ENCODE measurements at regions of chr2 and their contacts with region 1.

Region 1: GRCh38 chr2:172102391-172103278 is at the start of gene DLX2:
- DNase-seq: peak in 8 of 9 experiments; percentile 42 to 85 (median 66)
- ATAC-seq: peak; percentile 24
- H3K4me3 ChIP-seq: peak within 1 kb of the TSS; percentile 46 to 57
- H3K4me3 Mint-ChIP-seq: peak within 1 kb of the TSS; percentile 80
- H3K27ac ChIP-seq: no peak within 1 kb of the TSS
- H3K27ac Mint-ChIP-seq: no peak within 1 kb of the TSS
- H3K4me1 ChIP-seq: peaks cover 76% of the 10 kb centered on the region
- H3K4me1 Mint-ChIP-seq: peaks cover 46% of the 10 kb centered on the region
- H3K27me3 ChIP-seq: peaks cover 86 to 89% of the 10 kb centered on the region in 2 experiments
- H3K27me3 Mint-ChIP-seq: peaks cover 62% of the 10 kb centered on the region
- CTCF ChIP-seq: no peak
- total RNA-seq, gene DLX2: 0.14 TPM in 1 of 2 experiments, not detected in the other

Region 2: GRCh38 chr2:171433763-171434670 is 668.6 kb before region 1 on chr2 and contains the starts of genes DCAF17 and METTL8:
- CTCF ChIA-PET with region 1: no interaction called
- POLR2A ChIA-PET with region 1: no interaction called
- intact Hi-C with region 1: loop called in 1 of 2 experiments (anchors 10 kb)
- DNase-seq: peak; percentile 84 to 97 (median 93)
- ATAC-seq: peak; percentile 91
- H3K4me3 ChIP-seq: peak within 1 kb of the TSS; percentile 79 to 93
- H3K4me3 Mint-ChIP-seq: peak within 1 kb of the TSS; percentile 91
- H3K27ac ChIP-seq: peak within 1 kb of the TSS; percentile 80 to 97
- H3K27ac Mint-ChIP-seq: peak within 1 kb of the TSS; percentile 96
- H3K4me1 ChIP-seq: peaks cover 12% of the 10 kb centered on the region
- H3K4me1 Mint-ChIP-seq: peaks cover 47% of the 10 kb centered on the region
- H3K27me3 ChIP-seq: no peaks in the 10 kb centered on the region
- H3K27me3 Mint-ChIP-seq: no peaks in the 10 kb centered on the region
- CTCF ChIP-seq: peak; percentile 12
- total RNA-seq, gene DCAF17: 12.5 to 12.9 TPM
- total RNA-seq, gene METTL8: 6.2 to 7.7 TPM

Region 3: GRCh38 chr2:171598713-171599319 is 503.8 kb before region 1 on chr2:
- CTCF ChIA-PET with region 1: interaction called, 3 read pairs
- POLR2A ChIA-PET with region 1: no interaction called
- intact Hi-C with region 1: loop called in 1 of 2 experiments (anchors 5 kb)
- DNase-seq: peak in 8 of 9 experiments; percentile 9 to 75 (median 48)
- ATAC-seq: peak; percentile 95
- H3K4me3 ChIP-seq: no peak overlapping the region
- H3K4me3 Mint-ChIP-seq: no peak overlapping the region
- H3K27ac ChIP-seq: no peak overlapping the region
- H3K27ac Mint-ChIP-seq: no peak overlapping the region
- H3K4me1 ChIP-seq: peaks cover 4% of the 10 kb centered on the region
- H3K4me1 Mint-ChIP-seq: peaks cover 4% of the 10 kb centered on the region
- H3K27me3 ChIP-seq: no peaks in the 10 kb centered on the region
- H3K27me3 Mint-ChIP-seq: peaks cover 4% of the 10 kb centered on the region
- CTCF ChIP-seq: peak; percentile 82

Region 4: DNA sequence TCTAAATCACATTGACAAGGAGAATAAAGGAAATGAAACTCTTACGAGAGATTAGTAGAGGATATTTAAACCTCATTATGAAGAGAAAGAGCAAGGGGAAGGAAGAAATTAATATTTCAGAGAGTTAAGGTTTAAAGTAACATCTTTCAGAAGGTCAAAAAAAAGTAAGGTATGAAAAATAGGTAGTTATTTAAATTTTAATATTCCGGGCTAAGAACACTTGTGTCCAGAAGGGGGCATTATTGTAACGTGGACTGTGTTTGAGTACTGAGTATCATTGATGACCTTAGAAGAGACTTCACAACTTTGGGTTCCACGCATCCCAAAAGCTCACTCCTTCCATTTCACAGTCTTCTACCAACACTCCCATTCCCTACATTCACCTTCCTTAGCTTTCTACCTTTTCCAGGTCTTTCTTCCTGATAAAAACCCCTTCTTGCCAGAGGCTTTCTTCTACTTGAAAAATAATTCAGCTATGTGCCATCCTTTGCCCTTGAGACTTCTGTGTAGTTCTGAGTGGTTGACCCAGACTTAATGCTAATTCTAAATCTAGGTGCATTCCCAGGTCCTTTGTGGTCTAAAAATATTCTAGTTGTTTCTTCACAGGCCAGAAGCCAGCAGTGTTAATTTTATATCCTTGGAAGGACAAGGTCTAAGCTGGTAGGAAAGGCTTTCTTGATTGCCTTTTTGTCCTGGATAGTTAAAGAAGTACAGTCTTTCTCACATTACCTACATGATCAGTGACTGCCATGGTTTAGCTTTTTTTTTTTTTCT is 398.9 kb before region 1 on chr2:
- CTCF ChIA-PET with region 1: interaction called, 10 read pairs
- POLR2A ChIA-PET with region 1: interaction called, 3 read pairs
- intact Hi-C with region 1: loop called (anchors 2 kb)
- DNase-seq: peak in 2 of 9 experiments; percentile 47 to 59
- ATAC-seq: no peak
- H3K4me3 ChIP-seq: no peak overlapping the region
- H3K4me3 Mint-ChIP-seq: no peak overlapping the region
- H3K27ac ChIP-seq: no peak overlapping the region
- H3K27ac Mint-ChIP-seq: peak overlapping the region; percentile 15
- H3K4me1 ChIP-seq: no peaks in the 10 kb centered on the region
- H3K4me1 Mint-ChIP-seq: peaks cover 7% of the 10 kb centered on the region
- H3K27me3 ChIP-seq: no peaks in the 10 kb centered on the region
- H3K27me3 Mint-ChIP-seq: no peaks in the 10 kb centered on the region
- CTCF ChIP-seq: peak; percentile 54

Region 5: DNA sequence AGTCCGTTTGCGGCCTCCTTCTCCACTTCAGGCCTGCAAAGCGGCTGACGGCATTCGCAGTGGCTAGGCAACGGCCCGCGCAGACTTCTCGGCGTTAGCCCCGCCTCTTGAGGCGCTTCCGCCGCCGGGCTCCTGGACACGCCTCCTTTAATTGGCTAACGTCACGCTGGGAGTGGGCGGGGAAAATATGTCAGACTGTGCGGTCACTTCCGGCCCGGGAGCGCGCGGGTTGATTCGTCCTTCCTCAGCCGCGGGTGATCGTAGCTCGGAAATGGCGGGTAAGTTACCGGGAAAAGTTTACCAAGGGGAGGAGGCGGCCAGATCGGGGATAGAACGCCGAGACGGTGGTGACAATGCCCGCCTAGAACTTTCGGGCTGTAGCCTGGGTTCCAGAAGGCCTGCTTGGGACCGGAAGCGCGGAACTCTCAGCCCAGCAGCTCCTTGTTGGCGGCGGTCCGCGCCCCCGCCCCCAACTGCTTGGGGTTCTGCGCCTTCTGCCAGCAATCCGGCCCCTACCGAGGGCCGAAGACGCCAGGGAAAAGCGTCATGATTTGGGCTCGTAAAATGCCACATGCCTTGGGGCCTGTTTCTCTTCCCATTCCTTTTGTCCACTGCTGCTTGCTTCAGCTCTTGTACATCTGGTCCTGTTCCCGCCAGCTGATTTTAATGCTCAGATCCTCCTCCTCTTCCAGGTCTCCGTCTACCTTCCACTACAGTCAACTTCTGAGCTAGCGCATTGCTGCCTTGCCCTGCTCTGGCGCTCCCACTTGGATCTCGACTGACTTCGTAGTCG is 180.2 kb before region 1 on chr2 and contains the start of gene HAT1:
- CTCF ChIA-PET with region 1: interaction called, 3 read pairs
- POLR2A ChIA-PET with region 1: no interaction called
- intact Hi-C with region 1: loop called (anchors 2 to 5 kb)
- DNase-seq: peak; percentile 94 to 99 (median 97)
- ATAC-seq: peak; percentile 98
- H3K4me3 ChIP-seq: peak within 1 kb of the TSS; percentile 82 to 97
- H3K4me3 Mint-ChIP-seq: peak within 1 kb of the TSS; percentile 98
- H3K27ac ChIP-seq: peak within 1 kb of the TSS; percentile 94 to 96
- H3K27ac Mint-ChIP-seq: peak within 1 kb of the TSS; percentile 97
- H3K4me1 ChIP-seq: peaks cover 21% of the 10 kb centered on the region
- H3K4me1 Mint-ChIP-seq: peaks cover 45% of the 10 kb centered on the region
- H3K27me3 ChIP-seq: no peaks in the 10 kb centered on the region
- H3K27me3 Mint-ChIP-seq: no peaks in the 10 kb centered on the region
- CTCF ChIP-seq: no peak
- total RNA-seq, gene HAT1: 29.5 to 30.2 TPM

Region 6: GRCh38 chr2:171999604-172000469 is 102.8 kb before region 1 on chr2 and contains the start of gene METAP1D:
- CTCF ChIA-PET with region 1: no interaction called
- POLR2A ChIA-PET with region 1: no interaction called
- intact Hi-C with region 1: loop called (anchors 5 kb)
- DNase-seq: peak; percentile 61 to 91 (median 81)
- ATAC-seq: peak; percentile 87
- H3K4me3 ChIP-seq: peak within 1 kb of the TSS; percentile 85 to 87
- H3K4me3 Mint-ChIP-seq: peak within 1 kb of the TSS; percentile 84
- H3K27ac ChIP-seq: peak within 1 kb of the TSS; percentile 57 to 69
- H3K27ac Mint-ChIP-seq: peak within 1 kb of the TSS; percentile 82
- H3K4me1 ChIP-seq: peaks cover 8% of the 10 kb centered on the region
- H3K4me1 Mint-ChIP-seq: peaks cover 23% of the 10 kb centered on the region
- H3K27me3 ChIP-seq: peaks cover 0 to 4% of the 10 kb centered on the region in 2 experiments
- H3K27me3 Mint-ChIP-seq: peaks cover 8% of the 10 kb centered on the region
- CTCF ChIP-seq: no peak
- total RNA-seq, gene METAP1D: 5.7 to 6.2 TPM

Region 7: GRCh38 chr2:172084734-172085459 is 17.7 kb before region 1 on chr2:
- CTCF ChIA-PET with region 1: interaction called, 4 read pairs
- POLR2A ChIA-PET with region 1: interaction called, 9 read pairs
- intact Hi-C with region 1: loop called in 1 of 2 experiments (anchors 2 kb)
- DNase-seq: peak in 3 of 9 experiments; percentile 56 to 73 (median 59)
- ATAC-seq: peak; percentile 70
- H3K4me3 ChIP-seq: peak overlapping the region; percentile 13 to 33
- H3K4me3 Mint-ChIP-seq: peak overlapping the region; percentile 74
- H3K27ac ChIP-seq: no peak overlapping the region
- H3K27ac Mint-ChIP-seq: peak overlapping the region; percentile 52
- H3K4me1 ChIP-seq: peaks cover 48% of the 10 kb centered on the region
- H3K4me1 Mint-ChIP-seq: peaks cover 45% of the 10 kb centered on the region
- H3K27me3 ChIP-seq: peaks cover 95 to 97% of the 10 kb centered on the region in 2 experiments
- H3K27me3 Mint-ChIP-seq: peaks cover 91% of the 10 kb centered on the region
- CTCF ChIP-seq: no peak

Region 8: GRCh38 chr2:172131713-172132555 is 29.3 kb after region 1 on chr2:
- CTCF ChIA-PET with region 1: no interaction called
- POLR2A ChIA-PET with region 1: no interaction called
- intact Hi-C with region 1: no loop called
- DNase-seq: no peak
- ATAC-seq: no peak
- H3K4me3 ChIP-seq: no peak overlapping the region
- H3K4me3 Mint-ChIP-seq: no peak overlapping the region
- H3K27ac ChIP-seq: no peak overlapping the region
- H3K27ac Mint-ChIP-seq: no peak overlapping the region
- H3K4me1 ChIP-seq: no peaks in the 10 kb centered on the region
- H3K4me1 Mint-ChIP-seq: no peaks in the 10 kb centered on the region
- H3K27me3 ChIP-seq: no peaks in the 10 kb centered on the region
- H3K27me3 Mint-ChIP-seq: peaks cover 9% of the 10 kb centered on the region
- CTCF ChIP-seq: no peak